ENCODE measurements at regions of chr5 and their contacts with region 1.

Region 1: GRCh38 chr5:110001648-110002047 is 311.9 kb downstream of the MAN2A1 start:
- DNase-seq: no peak
- H3K4me3 ChIP-seq: no peak overlapping the region
- H3K27ac ChIP-seq: peak overlapping the region; percentile 49 to 75 (median 67)
- H3K4me1 ChIP-seq: peaks cover 0 to 43% (median 41%) of the 10 kb centered on the region in 4 donors
- H3K27me3 ChIP-seq: no peaks in the 10 kb centered on the region
- CTCF ChIP-seq: no peak
- EP300 ChIP-seq: no peak
- POLR2A ChIP-seq: no peak

Region 2: DNA sequence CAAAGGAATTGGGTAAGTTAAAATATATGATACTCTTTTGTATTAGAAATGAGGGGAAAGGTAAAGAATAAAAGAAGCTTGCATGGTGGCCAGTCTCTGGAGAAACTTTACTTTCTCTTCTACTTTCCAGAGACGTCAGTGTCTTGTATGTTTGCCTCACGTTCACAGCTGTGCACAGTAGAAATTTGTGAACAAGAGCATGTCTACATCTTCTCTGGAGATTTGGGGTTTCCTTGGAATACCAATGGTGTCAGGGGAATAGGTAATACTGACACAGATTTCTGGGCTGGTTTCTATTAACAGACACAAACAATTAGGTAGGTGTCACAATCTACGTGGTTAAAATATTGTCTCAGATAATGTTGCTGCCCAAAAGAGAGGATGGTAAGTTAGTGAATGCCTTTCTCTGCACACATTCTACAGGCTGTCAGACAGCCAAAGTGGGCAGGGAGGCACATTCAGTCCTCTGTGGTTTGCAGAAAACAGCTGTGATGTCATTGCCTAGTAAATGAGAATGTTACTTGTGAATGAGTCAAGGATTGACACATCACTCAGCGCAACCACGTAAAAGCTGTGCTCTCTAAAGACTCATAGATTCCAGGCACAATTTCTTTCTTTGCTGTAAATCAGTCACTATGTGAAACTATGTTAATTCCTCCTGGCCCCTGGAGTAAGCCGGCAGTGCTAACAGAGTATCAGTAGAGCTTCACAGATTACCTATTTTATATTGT is 85.2 kb after region 1 on chr5:
- intact Hi-C with region 1: loop called (anchors 5 kb)
- DNase-seq: peak; percentile 82
- H3K4me3 ChIP-seq: no peak overlapping the region
- H3K27ac ChIP-seq: peak overlapping the region in 1 of 4 donors; percentile 32
- H3K4me1 ChIP-seq: peaks cover 0 to 16% (median 6%) of the 10 kb centered on the region in 4 donors
- H3K27me3 ChIP-seq: no peaks in the 10 kb centered on the region
- CTCF ChIP-seq: no peak
- EP300 ChIP-seq: peak; percentile 77 to 96 (median 86)
- POLR2A ChIP-seq: no peak